ENCODE measurements at regions of chr4 and their contacts with region 1.

Region 1: DNA sequence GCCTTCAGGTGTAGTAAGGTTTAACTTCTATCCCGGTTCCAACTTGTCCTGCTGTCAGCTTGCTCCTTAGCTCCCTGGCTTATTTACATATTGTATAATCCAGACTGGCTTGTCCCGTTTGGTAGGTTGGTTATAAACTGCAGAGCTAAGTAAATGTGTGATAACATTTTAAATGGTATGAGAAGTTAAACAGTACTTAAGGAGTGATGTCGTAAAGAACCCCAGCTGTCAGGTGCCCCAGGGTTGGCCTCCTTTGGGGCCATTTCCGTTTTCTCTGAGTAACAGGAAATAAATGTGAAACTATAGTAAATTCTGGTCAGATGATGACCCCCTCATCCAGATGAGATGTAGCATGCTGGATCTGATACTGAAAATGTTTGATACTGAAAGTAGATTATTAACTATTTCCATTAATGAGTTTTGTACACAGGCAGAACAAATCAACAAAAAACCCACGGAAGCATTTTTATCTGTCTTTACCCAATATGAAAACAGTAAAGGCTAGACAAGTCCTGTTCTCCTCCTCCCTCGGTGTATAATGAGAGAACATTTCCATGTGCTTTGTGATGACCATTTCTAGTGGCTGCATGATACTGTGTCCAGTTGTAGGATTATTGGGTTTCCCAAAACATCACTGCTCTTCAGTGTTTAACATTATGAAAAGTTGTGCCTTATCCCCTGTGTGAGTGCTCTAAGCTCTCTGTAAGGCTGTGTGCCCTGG is 22.4 kb downstream of the GAB1 start:
- DNase-seq: no peak
- ATAC-seq: peak; percentile 32

Region 2: GRCh38 chr4:143399113-143399949 is 40.2 kb after region 1 on chr4:
- intact Hi-C with region 1: loop called (anchors 5 kb)
- DNase-seq: no peak
- ATAC-seq: no peak